GM18951 (cell line): ENCODE measurements at regions of chr5 and their contacts with region 1.

Region 1: GRCh38 chr5:170740551-170741205 is 42.8 kb upstream of the GABRP start:
- POLR2A ChIP-seq: no peak

Region 2: GRCh38 chr5:170774836-170775235 is 34.2 kb after region 1 on chr5:
- in situ Hi-C with region 1: loop called (anchors 5 kb)
- POLR2A ChIP-seq: no peak